ENCODE measurements at regions of chr22 and their contacts with region 1.

Region 1: DNA sequence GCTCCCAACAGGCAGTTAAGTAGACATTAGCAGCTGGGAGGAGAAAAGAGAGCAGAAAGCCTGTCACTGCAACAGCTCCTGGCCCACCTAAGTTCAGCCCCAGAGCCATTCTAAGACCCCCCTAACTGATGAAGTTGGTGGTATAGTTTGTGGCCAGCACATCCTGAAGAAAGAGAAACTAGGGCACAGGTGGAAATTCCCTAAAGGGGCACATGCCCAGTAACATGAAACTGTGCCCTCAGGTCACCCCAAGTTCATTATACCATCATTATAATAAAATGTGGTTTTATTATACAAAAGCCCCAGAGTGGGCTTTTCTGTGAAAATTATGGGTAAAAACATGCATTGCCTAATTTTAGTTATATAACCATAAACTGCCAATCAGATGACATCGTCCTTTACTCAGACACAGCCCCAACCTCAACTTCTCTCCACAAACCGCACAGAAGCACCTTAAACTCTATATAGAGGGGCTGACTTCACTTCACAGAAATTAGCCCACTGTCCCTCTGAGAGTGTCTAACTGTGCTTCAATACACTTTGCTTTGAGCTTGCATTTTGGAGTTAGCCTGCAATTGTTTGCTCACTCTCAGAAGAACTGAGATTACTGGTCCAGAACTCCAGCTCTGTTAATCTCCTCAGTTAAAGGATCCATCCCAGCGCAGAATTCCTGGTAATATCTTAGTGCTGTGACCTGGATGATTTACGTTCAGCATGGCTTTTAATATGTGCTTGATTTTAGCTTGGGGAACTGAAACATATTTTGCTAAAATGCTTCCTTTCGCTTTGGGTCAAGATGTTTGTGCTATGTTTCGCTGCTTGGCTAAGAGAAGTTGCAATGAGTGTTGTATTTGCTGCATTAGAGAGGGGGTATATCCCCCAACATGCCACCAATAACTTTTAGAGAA is 1.8 kb upstream of the APOL3 start:
- DNase-seq: peak in 9 of 10 donors; percentile 13 to 81 (median 67)
- ATAC-seq: peak; percentile 51 to 67
- H3K4me3 Mint-ChIP-seq: peak overlapping the region; percentile 93 to 98 (median 94)
- H3K27ac Mint-ChIP-seq: peak overlapping the region; percentile 96 to 99 (median 98)
- H3K4me1 Mint-ChIP-seq: peaks cover 52 to 97% (median 93%) of the 10 kb centered on the region in 4 donors
- H3K27me3 Mint-ChIP-seq: peaks cover 0 to 3% (median 0%) of the 10 kb centered on the region in 5 donors

Region 2: DNA sequence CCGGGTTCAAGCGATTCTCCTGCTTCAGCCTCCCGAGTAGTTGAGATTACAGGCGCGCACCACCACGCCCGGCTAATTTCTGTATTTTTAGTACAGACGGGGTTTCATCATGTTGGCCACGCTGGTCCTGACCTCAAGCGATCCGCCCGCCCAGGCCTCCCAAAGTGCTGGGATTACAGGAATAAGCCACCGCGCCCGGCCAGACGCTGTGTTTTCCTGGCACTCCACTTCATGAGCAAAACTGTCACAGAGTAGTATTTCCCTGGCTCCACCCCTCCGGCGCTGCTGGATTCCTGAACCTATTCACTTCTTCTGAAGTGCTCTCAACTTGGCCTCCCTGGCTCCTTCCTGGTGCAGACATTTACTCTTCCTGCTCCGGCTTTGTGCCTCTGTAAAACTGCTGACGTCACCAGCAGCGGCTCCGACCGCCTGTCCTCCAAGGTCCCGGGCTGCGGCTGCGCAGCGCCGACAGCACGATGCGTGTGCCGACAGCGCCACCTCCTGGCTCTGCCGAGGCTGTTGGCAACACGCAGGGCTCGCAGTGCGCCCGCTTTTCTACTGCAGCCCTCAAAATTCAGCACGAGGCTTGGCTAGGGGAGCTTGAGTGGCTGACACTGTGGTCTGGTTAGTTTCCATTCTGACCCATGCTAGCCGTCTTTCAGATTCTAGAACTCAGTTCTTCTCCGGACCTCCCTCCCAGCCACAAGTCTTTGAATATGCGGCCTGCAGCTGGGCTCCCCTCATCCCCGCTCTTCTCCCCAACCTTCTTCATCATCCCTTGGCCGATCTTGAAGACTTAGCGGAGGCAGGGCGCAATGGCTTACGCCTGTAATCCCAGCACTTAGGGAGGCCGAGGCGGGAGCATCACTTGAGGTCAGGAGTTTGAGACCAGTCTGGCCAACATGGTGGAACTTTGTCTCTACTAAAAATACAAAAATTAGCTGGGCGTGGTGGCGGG is 38.4 kb before region 1 on chr22:
- POLR2A ChIA-PET with region 1: no interaction called
- DNase-seq: peak; percentile 80 to 95 (median 92)
- ATAC-seq: peak; percentile 95 to 97
- H3K4me3 Mint-ChIP-seq: peak overlapping the region; percentile 66 to 89 (median 84)
- H3K27ac Mint-ChIP-seq: peak overlapping the region; percentile 92 to 97 (median 96)
- H3K4me1 Mint-ChIP-seq: peaks cover 6 to 19% (median 10%) of the 10 kb centered on the region in 4 donors
- H3K27me3 Mint-ChIP-seq: peaks cover 0 to 2% (median 0%) of the 10 kb centered on the region in 5 donors

Region 3: DNA sequence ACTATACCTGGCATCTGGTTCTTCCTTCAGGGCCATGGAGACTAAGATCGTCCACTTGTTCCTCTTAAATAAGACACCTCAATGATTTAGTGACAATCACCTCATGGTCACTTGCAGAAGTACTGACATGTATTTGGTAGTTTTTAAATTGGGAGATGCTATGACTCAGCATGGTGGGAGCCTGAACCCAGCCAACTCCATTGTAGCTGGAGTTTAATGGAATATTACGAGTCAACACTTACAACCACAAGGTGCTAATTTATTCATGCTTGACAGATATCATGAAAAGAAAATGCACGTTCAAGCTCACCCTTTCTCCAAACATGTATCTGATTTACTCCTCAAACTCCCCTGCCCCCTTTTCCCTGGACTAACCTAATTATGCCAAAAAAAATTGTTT is 14.8 kb after region 1 on chr22:
- POLR2A ChIA-PET with region 1: interaction called, 10 read pairs
- DNase-seq: no peak
- ATAC-seq: no peak
- H3K4me3 Mint-ChIP-seq: no peak overlapping the region
- H3K27ac Mint-ChIP-seq: peak overlapping the region in 1 of 10 donors; percentile 6
- H3K4me1 Mint-ChIP-seq: peaks cover 0 to 7% (median 4%) of the 10 kb centered on the region in 4 donors
- H3K27me3 Mint-ChIP-seq: no peaks in the 10 kb centered on the region

Measured in naive thymus-derived CD8-positive, alpha-beta T cell (primary cell).